ENCODE measurements at regions of chrX and their contacts with region 1.

Region 1: DNA sequence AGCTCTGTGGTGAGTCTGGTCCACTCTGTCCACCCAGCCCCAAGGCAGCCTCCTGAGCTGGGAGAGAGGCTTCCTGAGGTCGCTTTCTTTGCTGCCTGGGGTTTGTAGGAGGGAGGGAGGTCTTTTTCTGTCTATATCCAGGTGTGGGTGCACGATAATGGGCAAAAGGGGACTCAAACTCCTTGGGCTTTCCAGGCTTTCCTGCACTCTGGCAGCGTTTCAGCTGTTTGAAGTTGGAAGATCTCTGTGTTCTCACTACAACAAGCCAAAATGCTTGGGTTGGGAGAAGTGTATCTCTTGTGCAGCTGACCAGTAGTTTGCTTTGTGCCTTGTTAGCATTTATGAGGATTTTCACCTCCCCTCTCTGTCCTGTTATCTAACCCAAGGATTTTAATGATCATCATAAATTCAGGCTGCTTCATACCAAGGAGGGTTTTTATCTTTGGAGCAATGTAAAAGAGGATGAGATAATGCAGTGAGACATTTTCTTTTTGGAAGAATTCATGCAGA is 126.3 kb downstream of the REPS2 start:
- DNase-seq: no peak
- H3K4me3 Mint-ChIP-seq: no peak overlapping the region
- H3K27ac Mint-ChIP-seq: no peak overlapping the region
- H3K4me1 Mint-ChIP-seq: no peaks in the 10 kb centered on the region
- H3K27me3 Mint-ChIP-seq: no peaks in the 10 kb centered on the region
- CTCF ChIP-seq: no peak

Region 2: GRCh38 chrX:16418650-16419049 is 654.1 kb before region 1 on chrX:
- CTCF ChIA-PET with region 1: interaction called, 12 read pairs
- intact Hi-C with region 1: no loop called
- DNase-seq: no peak
- H3K4me3 Mint-ChIP-seq: no peak overlapping the region
- H3K27ac Mint-ChIP-seq: no peak overlapping the region
- H3K4me1 Mint-ChIP-seq: no peaks in the 10 kb centered on the region
- H3K27me3 Mint-ChIP-seq: no peaks in the 10 kb centered on the region
- CTCF ChIP-seq: no peak

Measured in Calu3 (cell line).